HAP-1 (cell line): ENCODE measurements at regions of chr9 and their contacts with region 1.

Region 1: DNA sequence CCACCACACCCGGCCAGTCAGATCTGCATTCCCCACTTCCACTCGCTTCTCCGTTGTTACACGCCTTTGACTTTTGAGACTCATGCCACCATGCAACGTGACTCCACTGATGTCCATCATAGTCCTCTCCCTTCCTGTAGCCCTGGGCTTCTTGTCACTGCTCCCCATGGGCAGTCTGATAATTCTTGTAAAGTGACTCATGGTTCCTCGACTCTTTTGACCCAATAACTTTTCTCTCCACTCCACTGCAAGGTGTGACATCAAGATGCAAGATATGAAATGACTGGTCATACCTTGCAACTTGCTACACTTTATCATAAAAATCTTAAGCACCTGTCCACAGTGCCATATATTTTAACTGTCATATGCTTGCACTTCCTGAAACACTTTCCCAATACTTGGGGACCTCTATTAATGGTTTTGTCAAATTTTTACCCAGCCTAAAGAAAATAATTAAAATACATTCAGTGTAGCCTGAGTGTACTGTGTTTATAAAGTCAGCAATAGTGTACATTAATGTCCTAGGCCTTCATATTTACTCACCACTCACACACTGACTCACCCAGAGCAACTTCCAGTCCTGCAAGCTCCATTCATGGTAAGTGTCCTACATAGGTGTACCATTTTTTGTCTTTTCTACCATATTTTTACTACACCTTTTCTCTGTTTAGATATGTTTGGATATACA is 18.6 kb upstream of the ANKRD18A start:
- DNase-seq: no peak
- H3K4me3 ChIP-seq: no peak overlapping the region
- H3K4me1 ChIP-seq: no peaks in the 10 kb centered on the region
- H3K27me3 ChIP-seq: no peaks in the 10 kb centered on the region

Region 2: DNA sequence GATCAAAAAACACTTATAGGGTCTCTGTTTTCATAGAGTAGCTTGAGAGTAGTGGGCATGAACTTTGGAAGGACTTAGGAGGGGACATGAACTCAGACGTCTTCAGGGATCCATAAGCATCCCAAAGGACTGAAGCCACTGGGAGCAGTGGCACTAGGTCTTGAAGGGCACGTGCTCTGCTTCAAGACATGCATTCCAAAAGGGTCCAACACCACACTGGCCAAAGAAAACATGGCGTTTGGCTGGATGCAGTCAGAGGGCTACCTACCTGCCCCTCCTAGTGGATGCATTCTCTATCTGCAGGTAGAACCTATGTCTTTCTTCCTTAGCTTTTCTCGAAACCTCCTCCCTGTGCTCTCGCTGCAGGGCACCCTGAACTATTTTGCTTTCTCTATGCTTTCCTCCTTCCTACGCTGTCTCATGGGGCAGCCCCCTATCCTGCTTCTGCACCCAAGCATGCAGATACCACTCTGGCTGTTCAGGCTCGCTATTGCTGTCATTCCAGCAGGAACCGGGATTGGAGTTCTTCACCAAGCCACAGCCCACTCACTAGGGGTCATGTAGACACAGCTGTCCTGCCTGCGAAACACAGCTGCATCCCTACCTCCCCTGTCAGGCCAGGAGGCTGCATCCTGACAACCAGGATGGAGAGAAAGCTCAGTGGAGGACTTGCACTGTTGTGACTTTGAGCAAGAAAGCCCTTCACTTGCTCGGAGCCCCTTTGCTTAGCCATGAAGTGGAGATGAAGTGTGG is 69.0 kb after region 1 on chr9:
- in situ Hi-C with region 1: loop called (anchors 10 kb)
- DNase-seq: peak; percentile 32 to 47
- H3K4me3 ChIP-seq: no peak overlapping the region
- H3K4me1 ChIP-seq: no peaks in the 10 kb centered on the region
- H3K27me3 ChIP-seq: no peaks in the 10 kb centered on the region